ENCODE measurements at regions of chr6 and their contacts with region 1.

Region 1: DNA sequence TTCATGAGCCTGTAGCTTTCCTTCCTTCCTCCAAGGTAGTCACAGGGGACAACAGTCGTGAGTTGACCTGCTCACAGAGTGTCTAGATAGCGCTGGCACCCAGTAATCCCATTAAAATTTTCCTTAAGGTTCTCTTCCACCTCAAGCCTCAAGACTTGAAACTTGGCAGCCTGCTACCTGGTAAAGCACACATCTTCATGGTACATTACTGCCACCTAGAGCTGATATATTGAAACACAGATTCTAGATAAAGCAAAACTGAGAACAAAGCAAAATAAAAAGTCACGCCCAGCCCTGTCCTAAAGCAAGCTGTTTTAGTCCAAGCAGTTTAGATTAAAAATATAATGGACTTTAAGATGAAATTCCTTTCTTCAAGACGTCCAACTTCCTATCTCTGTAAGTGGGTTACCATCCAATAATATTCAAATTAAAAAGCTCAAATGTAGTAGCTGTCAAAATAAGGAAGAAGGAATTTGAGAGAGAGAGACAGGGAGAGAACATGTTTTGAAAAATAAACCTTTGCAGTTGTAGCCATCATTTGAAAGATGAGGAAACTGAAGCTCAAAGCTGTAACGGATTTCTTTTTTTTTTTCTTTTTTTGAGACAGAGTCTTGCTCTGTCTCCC is 50.7 kb upstream of the CD83 start:
- DNase-seq: peak in 5 of 7 donors; percentile 23 to 55 (median 30)
- H3K4me3 ChIP-seq: no peak overlapping the region
- H3K27ac ChIP-seq: no peak overlapping the region
- H3K4me1 ChIP-seq: peaks cover 0 to 7% of the 10 kb centered on the region in 2 donors
- H3K27me3 ChIP-seq: peaks cover 13% of the 10 kb centered on the region
- CTCF ChIP-seq: peak; percentile 34 to 77 (median 71)
- POLR2A ChIP-seq: no peak

Region 2: DNA sequence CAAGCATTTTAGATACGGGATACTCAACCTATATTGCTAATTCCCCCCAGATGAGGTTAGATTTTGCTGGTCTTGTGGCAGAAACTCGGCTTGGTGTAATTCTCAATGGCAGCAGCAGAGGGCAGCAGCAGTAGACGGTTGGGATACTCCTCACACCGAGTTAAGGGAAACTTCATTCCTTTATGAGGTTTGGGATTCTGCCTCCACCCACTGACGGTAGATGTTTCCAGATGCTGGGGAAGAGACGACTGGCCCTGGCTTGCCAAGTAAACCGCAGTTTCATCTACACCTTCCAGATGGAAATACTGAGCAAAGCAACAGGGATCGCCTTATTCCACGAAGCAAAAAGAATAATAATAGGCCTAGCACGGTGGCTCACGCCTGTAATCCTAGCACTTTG is 730.3 kb before region 1 on chr6:
- intact Hi-C with region 1: loop called in 1 of 2 experiments (anchors 10 kb)
- DNase-seq: peak in 6 of 7 donors; percentile 71 to 95 (median 82)
- H3K4me3 ChIP-seq: no peak overlapping the region
- H3K27ac ChIP-seq: no peak overlapping the region
- H3K4me1 ChIP-seq: no peaks in the 10 kb centered on the region
- H3K27me3 ChIP-seq: no peaks in the 10 kb centered on the region
- CTCF ChIP-seq: peak; percentile 78 to 94 (median 88)
- POLR2A ChIP-seq: no peak

Region 3: GRCh38 chr6:13795041-13795750 is 271.7 kb before region 1 on chr6:
- intact Hi-C with region 1: loop called in 1 of 2 experiments (anchors 10 kb)
- DNase-seq: peak; percentile 77 to 94 (median 83)
- H3K4me3 ChIP-seq: no peak overlapping the region
- H3K27ac ChIP-seq: no peak overlapping the region
- H3K4me1 ChIP-seq: no peaks in the 10 kb centered on the region
- H3K27me3 ChIP-seq: no peaks in the 10 kb centered on the region
- CTCF ChIP-seq: peak; percentile 76 to 94 (median 86)
- POLR2A ChIP-seq: no peak

Region 4: GRCh38 chr6:13908955-13909381 is 157.9 kb before region 1 on chr6:
- intact Hi-C with region 1: loop called (anchors 5 to 10 kb)
- DNase-seq: peak; percentile 49 to 68 (median 62)
- H3K4me3 ChIP-seq: no peak overlapping the region
- H3K27ac ChIP-seq: no peak overlapping the region
- H3K4me1 ChIP-seq: no peaks in the 10 kb centered on the region
- H3K27me3 ChIP-seq: no peaks in the 10 kb centered on the region
- CTCF ChIP-seq: peak; percentile 59 to 86 (median 82)
- POLR2A ChIP-seq: no peak

Region 5: GRCh38 chr6:13916230-13916944 is 150.5 kb before region 1 on chr6:
- intact Hi-C with region 1: loop called in 1 of 2 experiments (anchors 10 kb)
- DNase-seq: peak in 1 of 7 donors; percentile 2
- H3K4me3 ChIP-seq: no peak overlapping the region
- H3K27ac ChIP-seq: peak overlapping the region in 1 of 5 donors; percentile 13
- H3K4me1 ChIP-seq: no peaks in the 10 kb centered on the region
- H3K27me3 ChIP-seq: peaks cover 13% of the 10 kb centered on the region
- CTCF ChIP-seq: no peak
- POLR2A ChIP-seq: no peak

Region 6: DNA sequence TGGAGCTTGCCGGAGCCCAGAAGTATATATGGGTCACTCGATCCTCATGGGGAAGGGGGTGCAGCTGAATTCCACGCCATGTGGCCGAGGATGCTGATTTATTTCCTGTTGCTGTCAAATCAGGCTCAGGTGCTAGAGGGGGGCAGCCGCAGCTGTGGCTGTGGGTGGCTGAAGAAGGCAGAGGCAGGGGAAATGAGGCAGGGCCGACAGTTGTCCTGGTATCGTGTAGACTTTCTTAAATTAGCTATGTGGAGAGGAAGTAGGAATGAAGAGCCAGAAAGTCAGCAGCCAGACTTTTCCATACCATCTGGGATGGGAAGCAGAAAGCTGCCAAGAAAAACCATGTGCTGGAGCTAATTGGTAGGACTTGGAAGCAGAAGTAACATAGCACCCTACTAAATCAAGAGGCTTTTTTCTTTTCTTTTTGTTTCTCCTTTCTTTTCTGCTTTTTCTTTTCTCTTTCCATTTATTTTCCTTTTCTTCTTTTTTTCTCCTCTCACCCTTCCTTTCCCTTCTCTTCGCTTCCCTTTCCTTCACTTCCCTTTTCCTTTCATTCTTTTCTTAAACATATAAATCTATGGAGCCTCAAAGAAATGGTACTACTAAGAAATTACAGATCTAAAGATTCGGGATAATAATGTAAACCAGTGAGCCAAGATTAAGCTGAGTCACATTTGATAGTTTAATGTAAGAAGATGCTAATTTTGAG is 39.9 kb before region 1 on chr6:
- intact Hi-C with region 1: no loop called
- DNase-seq: no peak
- H3K4me3 ChIP-seq: no peak overlapping the region
- H3K27ac ChIP-seq: no peak overlapping the region
- H3K4me1 ChIP-seq: no peaks in the 10 kb centered on the region
- H3K27me3 ChIP-seq: no peaks in the 10 kb centered on the region
- CTCF ChIP-seq: no peak
- POLR2A ChIP-seq: no peak